ENCODE measurements at regions of chr15 and their contacts with region 1.

Region 1: DNA sequence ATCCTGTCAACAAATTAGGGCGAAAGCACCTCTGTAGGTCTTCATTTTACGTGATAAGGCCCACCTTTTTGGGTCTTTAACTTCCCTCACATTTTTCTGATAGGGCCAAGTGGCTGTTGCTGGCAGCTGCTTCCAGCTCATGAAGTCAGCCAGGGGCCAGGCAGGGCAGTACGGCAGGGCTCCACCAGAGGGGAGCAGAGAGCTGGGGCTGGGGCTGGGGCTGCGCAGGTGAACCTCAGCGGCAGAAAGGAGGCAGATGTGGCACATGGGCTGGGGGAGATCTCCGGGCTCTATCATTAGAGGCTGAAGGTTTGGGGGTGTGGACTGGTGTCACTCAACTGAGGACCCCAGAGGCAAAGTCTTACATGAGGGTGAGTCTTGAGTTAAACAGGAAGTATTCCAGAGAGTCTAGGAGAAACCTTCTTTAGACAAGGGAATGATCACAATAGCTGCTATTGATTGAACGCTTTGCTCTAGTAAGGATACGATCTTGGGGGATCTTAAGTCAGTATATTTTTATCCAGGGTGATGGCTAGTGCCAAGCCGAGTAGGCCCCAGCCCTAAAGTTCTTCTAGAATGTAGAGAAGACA is 62.8 kb upstream of the MEX3B start:
- DNase-seq: peak; percentile 94
- H3K4me3 Mint-ChIP-seq: peak overlapping the region; percentile 9
- H3K27ac Mint-ChIP-seq: no peak overlapping the region
- H3K4me1 Mint-ChIP-seq: peaks cover 8% of the 10 kb centered on the region
- H3K27me3 Mint-ChIP-seq: peaks cover 15% of the 10 kb centered on the region
- CTCF ChIP-seq: peak; percentile 93

Region 2: GRCh38 chr15:81410318-81410753 is 698.2 kb before region 1 on chr15:
- CTCF ChIA-PET with region 1: no interaction called
- intact Hi-C with region 1: loop called (anchors 2 kb)
- DNase-seq: peak; percentile 46
- H3K4me3 Mint-ChIP-seq: no peak overlapping the region
- H3K27ac Mint-ChIP-seq: no peak overlapping the region
- H3K4me1 Mint-ChIP-seq: no peaks in the 10 kb centered on the region
- H3K27me3 Mint-ChIP-seq: peaks cover 49% of the 10 kb centered on the region
- CTCF ChIP-seq: peak; percentile 34

Region 3: GRCh38 chr15:81480645-81481053 is 627.9 kb before region 1 on chr15:
- CTCF ChIA-PET with region 1: interaction called, 3 read pairs
- intact Hi-C with region 1: loop called (anchors 2 kb)
- DNase-seq: peak; percentile 70
- H3K4me3 Mint-ChIP-seq: no peak overlapping the region
- H3K27ac Mint-ChIP-seq: no peak overlapping the region
- H3K4me1 Mint-ChIP-seq: no peaks in the 10 kb centered on the region
- H3K27me3 Mint-ChIP-seq: peaks cover 14% of the 10 kb centered on the region
- CTCF ChIP-seq: peak; percentile 67

Region 4: DNA sequence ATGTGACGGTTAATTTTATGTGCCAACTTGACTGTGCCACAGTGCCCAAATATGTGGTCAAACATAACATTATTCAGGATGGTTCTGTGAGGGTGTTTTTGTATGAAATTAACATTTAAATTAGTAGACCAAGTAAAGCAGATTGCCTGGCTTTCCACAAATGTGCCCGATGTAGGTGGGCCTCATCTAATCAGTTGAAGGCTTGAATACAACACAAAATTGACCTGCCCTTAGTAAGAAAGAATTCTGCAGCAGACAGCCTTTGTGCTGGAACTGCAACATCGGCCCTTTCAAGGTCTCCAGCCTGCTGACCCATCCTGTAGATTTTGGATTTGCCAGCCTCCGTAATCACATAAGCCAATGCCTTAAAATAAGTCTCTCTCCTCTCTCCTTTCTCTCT is 278.7 kb before region 1 on chr15:
- CTCF ChIA-PET with region 1: no interaction called
- intact Hi-C with region 1: loop called (anchors 10 kb)
- DNase-seq: no peak
- H3K4me3 Mint-ChIP-seq: no peak overlapping the region
- H3K27ac Mint-ChIP-seq: no peak overlapping the region
- H3K4me1 Mint-ChIP-seq: no peaks in the 10 kb centered on the region
- H3K27me3 Mint-ChIP-seq: no peaks in the 10 kb centered on the region
- CTCF ChIP-seq: no peak

Region 5: GRCh38 chr15:82139823-82140268 is 31.3 kb after region 1 on chr15:
- CTCF ChIA-PET with region 1: interaction called, 21 read pairs
- intact Hi-C with region 1: loop called (anchors 2 kb)
- DNase-seq: no peak
- H3K4me3 Mint-ChIP-seq: no peak overlapping the region
- H3K27ac Mint-ChIP-seq: peak overlapping the region; percentile 1
- H3K4me1 Mint-ChIP-seq: peaks cover 29% of the 10 kb centered on the region
- H3K27me3 Mint-ChIP-seq: no peaks in the 10 kb centered on the region
- CTCF ChIP-seq: peak; percentile 58

Region 6: GRCh38 chr15:82197733-82198594 is 89.4 kb after region 1 on chr15:
- CTCF ChIA-PET with region 1: interaction called, 27 read pairs
- intact Hi-C with region 1: loop called (anchors 1 kb)
- DNase-seq: peak; percentile 80
- H3K4me3 Mint-ChIP-seq: no peak overlapping the region
- H3K27ac Mint-ChIP-seq: no peak overlapping the region
- H3K4me1 Mint-ChIP-seq: peaks cover 6% of the 10 kb centered on the region
- H3K27me3 Mint-ChIP-seq: no peaks in the 10 kb centered on the region
- CTCF ChIP-seq: peak; percentile 82